HCT116 (cell line): ENCODE measurements at regions of chr10 and their contacts with region 1.

Region 1: DNA sequence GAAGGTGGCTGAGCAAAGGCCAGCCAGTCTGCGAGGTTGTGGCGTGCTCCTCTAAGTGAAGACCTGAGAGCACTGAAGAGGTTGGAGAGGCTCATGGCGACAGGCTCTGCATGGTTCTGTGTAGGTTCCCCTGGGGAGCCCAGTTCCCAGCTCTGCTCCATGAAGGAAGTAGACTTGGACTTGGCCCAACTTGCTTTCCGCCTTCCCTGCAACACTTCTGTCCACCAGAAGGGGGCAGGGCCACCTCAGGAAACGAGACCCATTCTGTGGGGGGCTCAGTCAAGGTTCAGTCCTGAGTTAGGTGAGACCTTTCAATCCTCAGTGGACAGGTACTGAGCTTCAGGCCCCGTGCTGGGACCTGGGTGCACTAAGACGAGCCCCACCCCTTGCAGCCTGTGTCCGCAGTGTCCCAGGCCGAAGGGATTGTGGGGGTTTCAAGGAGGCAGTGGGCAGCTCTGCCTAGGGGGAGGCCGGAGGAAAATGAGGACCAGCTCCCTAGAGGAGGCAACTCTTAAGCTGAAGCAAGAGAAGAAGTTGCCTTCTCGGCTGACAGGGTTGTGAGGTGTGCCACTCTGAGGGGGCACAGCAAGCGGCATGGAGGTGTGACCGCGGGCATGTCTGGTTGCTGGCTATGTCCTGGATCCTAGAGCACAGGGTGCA is 15.0 kb upstream of the PCBD1 start:
- DNase-seq: no peak
- ATAC-seq: peak; percentile 79
- H3K4me3 ChIP-seq: no peak overlapping the region
- H3K27ac ChIP-seq: no peak overlapping the region
- H3K4me1 ChIP-seq: peaks cover 0 to 9% of the 10 kb centered on the region in 2 experiments; a peak in 1 of 4 replicates
- H3K27me3 ChIP-seq: no peaks in the 10 kb centered on the region
- CTCF ChIP-seq: peak; percentile 82 to 95 (median 95)
- POLR2A ChIP-seq: no peak
- RAD21 ChIP-seq: peak; percentile 97

Region 2: GRCh38 chr10:70890917-70891431 is 12.4 kb before region 1 on chr10:
- CTCF ChIA-PET with region 1: interaction called, 11 read pairs
- POLR2A ChIA-PET with region 1: interaction called, 4 read pairs
- RAD21 ChIA-PET with region 1: interaction called in 1 of 2 experiments, 3 read pairs
- intact Hi-C with region 1: no loop called
- DNase-seq: no peak
- ATAC-seq: no peak
- H3K4me3 ChIP-seq: no peak overlapping the region
- H3K27ac ChIP-seq: no peak overlapping the region
- H3K4me1 ChIP-seq: peaks cover 16 to 40% of the 10 kb centered on the region in 2 experiments
- H3K27me3 ChIP-seq: no peaks in the 10 kb centered on the region
- CTCF ChIP-seq: no peak
- POLR2A ChIP-seq: no peak
- RAD21 ChIP-seq: no peak

Region 3: DNA sequence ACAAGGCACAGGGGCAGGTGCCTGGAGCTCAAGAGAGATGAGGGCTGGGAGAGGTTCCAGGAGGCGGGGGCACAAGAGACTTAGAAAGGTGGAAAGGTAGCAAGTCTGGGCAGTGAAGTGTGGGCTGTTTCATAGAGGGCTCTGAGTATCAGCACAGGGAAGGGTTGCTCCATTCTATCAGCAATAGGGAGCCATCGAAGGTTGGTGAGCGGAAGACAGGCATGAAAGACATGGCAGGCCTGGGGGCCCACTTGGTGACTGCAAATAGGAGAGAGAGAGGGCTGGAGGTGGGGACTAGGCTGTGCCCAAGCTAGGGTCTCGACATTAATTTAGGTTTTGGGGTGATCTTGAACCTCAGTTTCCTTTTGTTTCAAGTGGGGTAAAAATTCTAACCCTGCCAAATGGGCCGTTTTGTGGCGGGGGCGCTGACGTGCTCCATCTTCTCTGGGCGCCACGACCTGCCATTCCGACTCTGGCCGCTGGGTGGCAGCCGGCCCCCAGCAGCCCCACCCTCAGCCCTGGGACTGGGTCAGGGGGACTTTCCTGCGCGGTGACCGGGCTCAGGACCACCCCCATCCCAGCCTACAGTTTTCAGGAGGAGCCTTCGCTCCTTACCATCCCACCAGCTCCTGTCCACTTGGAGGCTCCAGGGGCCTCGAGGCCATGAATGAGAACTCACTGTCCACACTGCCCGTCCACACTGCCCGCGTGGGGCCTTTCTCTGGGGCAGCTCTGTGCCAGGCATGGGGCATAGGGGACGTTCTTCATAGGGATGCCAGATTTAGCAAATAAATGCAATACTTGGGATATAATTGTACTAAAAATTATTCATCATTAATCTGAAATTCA is 22.2 kb after region 1 on chr10:
- CTCF ChIA-PET with region 1: interaction called, 6 read pairs
- POLR2A ChIA-PET with region 1: no interaction called
- RAD21 ChIA-PET with region 1: no interaction called
- intact Hi-C with region 1: loop called (anchors 1 kb)
- DNase-seq: no peak
- ATAC-seq: peak; percentile 83
- H3K4me3 ChIP-seq: no peak overlapping the region
- H3K27ac ChIP-seq: no peak overlapping the region
- H3K4me1 ChIP-seq: peaks cover 31 to 35% of the 10 kb centered on the region in 2 experiments
- H3K27me3 ChIP-seq: no peaks in the 10 kb centered on the region
- CTCF ChIP-seq: peak; percentile 89 to 95 (median 91)
- POLR2A ChIP-seq: no peak
- RAD21 ChIP-seq: peak; percentile 92

Region 4: GRCh38 chr10:71212318-71213126 is 309.1 kb after region 1 on chr10 and contains the start of gene UNC5B:
- CTCF ChIA-PET with region 1: interaction called, 10 read pairs
- POLR2A ChIA-PET with region 1: no interaction called
- RAD21 ChIA-PET with region 1: no interaction called
- intact Hi-C with region 1: loop called (anchors 1 kb)
- DNase-seq: peak; percentile 76
- ATAC-seq: peak; percentile 86
- H3K4me3 ChIP-seq: peak within 1 kb of the TSS; percentile 84 to 91
- H3K27ac ChIP-seq: peak within 1 kb of the TSS; percentile 82
- H3K4me1 ChIP-seq: peaks cover 32 to 58% of the 10 kb centered on the region in 2 experiments
- H3K27me3 ChIP-seq: peaks cover 27% of the 10 kb centered on the region; the same call in 1 of the 2 replicates
- CTCF ChIP-seq: 0 out of 6 replicates have a peak, but pooled peaks of 1 of the 3 experiments have one; percentile 9
- POLR2A ChIP-seq: peak; percentile 81
- RAD21 ChIP-seq: no peak
- total RNA-seq, gene UNC5B: 22.0 TPM

Region 5: DNA sequence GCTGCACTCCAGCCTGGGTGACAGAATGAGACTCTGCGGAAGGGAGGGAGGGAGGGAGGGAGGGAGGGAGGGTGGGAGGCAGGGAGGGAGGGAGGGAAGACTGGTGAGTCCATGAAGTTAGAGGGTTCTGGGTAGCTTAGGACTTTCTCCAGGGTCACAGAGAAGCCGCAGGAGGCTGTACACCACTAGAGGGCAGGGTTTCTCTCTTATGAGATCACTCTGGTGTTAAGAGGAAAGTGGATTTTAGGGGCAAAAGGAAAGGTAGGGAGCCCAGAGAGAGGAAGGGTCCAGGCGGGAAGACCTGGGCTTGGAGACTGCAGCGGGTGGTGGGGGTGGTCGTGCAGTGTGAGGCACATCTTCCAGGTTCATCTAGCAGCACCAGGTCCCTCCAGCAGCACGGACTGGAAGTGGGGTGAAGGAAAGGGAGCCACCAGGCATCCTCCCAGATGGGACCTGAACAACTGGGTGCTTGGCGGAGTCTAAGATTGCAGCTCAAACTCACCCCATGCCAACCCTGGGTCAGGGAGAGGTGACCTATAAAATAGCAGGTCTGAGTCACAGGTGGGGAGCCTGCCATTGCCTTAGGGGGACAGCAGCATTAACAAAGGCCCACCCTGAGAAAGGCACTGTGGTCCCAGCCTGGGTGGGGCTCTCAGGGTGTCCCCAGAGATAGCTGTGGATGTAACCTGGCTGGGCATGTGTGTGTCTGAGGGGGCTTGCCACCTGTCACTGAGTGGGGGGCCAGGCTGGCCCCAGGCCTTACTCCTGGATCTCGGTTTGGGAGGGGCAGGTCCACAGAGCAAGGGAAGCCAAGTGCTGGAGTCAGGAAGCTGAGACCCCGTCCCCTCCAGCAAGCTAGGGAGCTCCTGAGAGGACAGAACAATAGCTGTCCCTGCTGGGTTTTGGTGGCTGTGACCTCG is 367.2 kb after region 1 on chr10:
- CTCF ChIA-PET with region 1: interaction called, 19 read pairs
- POLR2A ChIA-PET with region 1: no interaction called
- RAD21 ChIA-PET with region 1: interaction called in 1 of 2 experiments, 4 read pairs
- intact Hi-C with region 1: loop called (anchors 2 kb)
- DNase-seq: peak; percentile 68
- ATAC-seq: peak; percentile 91
- H3K4me3 ChIP-seq: no peak overlapping the region
- H3K27ac ChIP-seq: no peak overlapping the region
- H3K4me1 ChIP-seq: peaks cover 24 to 34% of the 10 kb centered on the region in 2 experiments; a peak in 3 of 4 replicates
- H3K27me3 ChIP-seq: no peaks in the 10 kb centered on the region
- CTCF ChIP-seq: peak; percentile 32 to 85 (median 65); a peak in 5 of 6 replicates
- POLR2A ChIP-seq: no peak
- RAD21 ChIP-seq: peak; percentile 57

Region 6: GRCh38 chr10:71285180-71285545 is 381.8 kb after region 1 on chr10:
- CTCF ChIA-PET with region 1: interaction called, 16 read pairs
- POLR2A ChIA-PET with region 1: no interaction called
- RAD21 ChIA-PET with region 1: interaction called in 1 of 2 experiments, 3 read pairs
- intact Hi-C with region 1: loop called (anchors 1 kb)
- DNase-seq: no peak
- ATAC-seq: peak; percentile 90
- H3K4me3 ChIP-seq: no peak overlapping the region
- H3K27ac ChIP-seq: no peak overlapping the region
- H3K4me1 ChIP-seq: no peaks in the 10 kb centered on the region
- H3K27me3 ChIP-seq: no peaks in the 10 kb centered on the region
- CTCF ChIP-seq: peak; percentile 69 to 81 (median 73)
- POLR2A ChIP-seq: no peak
- RAD21 ChIP-seq: peak; percentile 87